Transverse colon (tissue), 4 donors: ENCODE measurements at regions of chr14 and their contacts with region 1.

Region 1: DNA sequence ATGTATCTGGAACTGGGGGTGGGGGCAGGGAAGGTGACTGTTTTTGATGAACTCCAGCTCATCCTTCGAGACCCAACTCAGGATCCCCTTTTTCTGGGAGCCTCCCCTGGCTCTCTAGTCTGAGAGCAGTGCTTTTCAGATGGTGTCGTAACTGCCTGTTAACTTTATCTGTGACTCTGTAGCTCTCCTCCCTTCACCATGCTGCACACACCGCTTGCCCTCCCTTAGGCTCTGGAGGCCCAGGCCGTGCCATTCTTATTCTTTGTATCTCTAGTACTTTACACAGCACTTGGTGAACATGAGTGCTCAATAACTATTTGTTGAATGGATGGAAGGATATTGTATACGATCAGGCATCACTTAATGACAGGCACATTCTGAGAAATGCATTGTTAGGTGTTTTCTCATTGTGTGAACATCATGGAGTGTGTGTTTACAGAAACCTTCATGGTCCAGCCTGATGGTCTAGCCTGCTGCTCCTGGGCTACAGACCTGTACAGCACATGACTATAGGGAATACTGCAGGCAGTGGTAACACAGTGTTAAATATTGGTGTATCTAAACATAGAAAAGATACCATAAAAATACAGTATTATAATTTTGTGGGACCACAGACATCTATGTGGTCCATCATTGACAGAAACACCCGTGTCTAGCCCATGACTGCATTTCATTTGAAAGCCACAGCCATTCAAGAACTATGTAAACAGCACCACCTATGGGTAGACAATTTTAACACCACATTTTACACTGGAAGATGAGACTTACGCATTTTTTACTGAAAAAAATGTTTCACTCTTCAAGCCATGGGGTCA is 91.8 kb downstream of the EML1 start:
- DNase-seq: no peak
- H3K4me3 ChIP-seq: no peak overlapping the region
- H3K27ac ChIP-seq: no peak overlapping the region
- H3K4me1 ChIP-seq: peaks cover 0 to 8% (median 3%) of the 10 kb centered on the region in 4 donors
- H3K27me3 ChIP-seq: no peaks in the 10 kb centered on the region
- CTCF ChIP-seq: peak; percentile 69 to 83 (median 71)
- EP300 ChIP-seq: no peak
- POLR2A ChIP-seq: no peak

Region 2: GRCh38 chr14:99524804-99525698 is 360.0 kb before region 1 on chr14:
- in situ Hi-C with region 1: loop called in 1 of 4 experiments (anchors 25 kb)
- intact Hi-C with region 1: no loop called
- DNase-seq: peak; percentile 38
- H3K4me3 ChIP-seq: no peak overlapping the region
- H3K27ac ChIP-seq: peak overlapping the region; percentile 43 to 84 (median 70)
- H3K4me1 ChIP-seq: peaks cover 31 to 43% (median 34%) of the 10 kb centered on the region in 4 donors
- H3K27me3 ChIP-seq: no peaks in the 10 kb centered on the region
- CTCF ChIP-seq: peak in 1 of 5 experiments; percentile 16
- EP300 ChIP-seq: no peak
- POLR2A ChIP-seq: no peak

Region 3: DNA sequence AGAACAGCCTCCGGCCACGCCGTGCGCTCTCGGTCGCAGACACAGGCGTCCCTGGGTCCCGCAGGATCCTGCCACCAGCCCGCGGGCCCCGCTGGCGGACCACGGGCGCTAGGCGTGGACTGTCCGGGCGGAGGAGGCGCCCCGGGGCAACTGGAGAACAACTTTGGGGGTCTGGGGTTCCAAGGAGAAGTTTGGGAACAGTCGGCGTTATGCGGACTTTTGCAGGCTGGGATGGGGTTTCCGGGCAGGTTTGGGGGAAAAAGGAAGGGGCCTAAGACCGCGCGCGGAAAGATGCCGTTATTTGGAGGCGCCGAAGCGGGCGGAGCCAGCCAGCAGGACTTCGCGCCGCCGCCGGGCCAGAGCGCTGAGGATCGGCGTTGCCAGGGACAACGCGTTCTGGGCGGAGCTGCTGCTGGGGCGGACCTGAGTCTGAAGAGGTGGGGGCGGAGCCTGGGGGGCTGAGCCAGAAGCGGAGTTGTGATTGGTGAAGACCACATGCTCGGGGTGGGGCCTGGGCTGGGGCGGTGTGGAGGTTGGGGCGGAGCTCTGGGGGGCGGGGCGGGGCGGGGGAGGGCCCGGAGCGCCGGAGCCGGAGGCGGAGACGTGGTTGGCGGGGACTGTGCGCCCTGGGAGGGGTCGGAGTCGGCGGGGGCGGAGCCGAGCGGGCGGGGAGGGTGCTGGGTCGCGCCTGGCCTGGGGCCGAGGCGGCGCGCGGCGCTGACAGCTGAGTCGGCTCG is 201.3 kb before region 1 on chr14 and contains the start of gene CYP46A1:
- in situ Hi-C with region 1: no loop called
- intact Hi-C with region 1: loop called (anchors 5 kb)
- DNase-seq: peak; percentile 100
- H3K4me3 ChIP-seq: peak within 1 kb of the TSS; percentile 62 to 93 (median 70)
- H3K27ac ChIP-seq: peak within 1 kb of the TSS; percentile 82 to 92 (median 88)
- H3K4me1 ChIP-seq: peaks cover 12 to 16% (median 15%) of the 10 kb centered on the region in 4 donors
- H3K27me3 ChIP-seq: peaks cover 29% of the 10 kb centered on the region
- CTCF ChIP-seq: no peak
- EP300 ChIP-seq: no peak
- POLR2A ChIP-seq: no peak
- total RNA-seq, gene CYP46A1: 0.27 to 0.75 (median 0.52) TPM

Region 4: DNA sequence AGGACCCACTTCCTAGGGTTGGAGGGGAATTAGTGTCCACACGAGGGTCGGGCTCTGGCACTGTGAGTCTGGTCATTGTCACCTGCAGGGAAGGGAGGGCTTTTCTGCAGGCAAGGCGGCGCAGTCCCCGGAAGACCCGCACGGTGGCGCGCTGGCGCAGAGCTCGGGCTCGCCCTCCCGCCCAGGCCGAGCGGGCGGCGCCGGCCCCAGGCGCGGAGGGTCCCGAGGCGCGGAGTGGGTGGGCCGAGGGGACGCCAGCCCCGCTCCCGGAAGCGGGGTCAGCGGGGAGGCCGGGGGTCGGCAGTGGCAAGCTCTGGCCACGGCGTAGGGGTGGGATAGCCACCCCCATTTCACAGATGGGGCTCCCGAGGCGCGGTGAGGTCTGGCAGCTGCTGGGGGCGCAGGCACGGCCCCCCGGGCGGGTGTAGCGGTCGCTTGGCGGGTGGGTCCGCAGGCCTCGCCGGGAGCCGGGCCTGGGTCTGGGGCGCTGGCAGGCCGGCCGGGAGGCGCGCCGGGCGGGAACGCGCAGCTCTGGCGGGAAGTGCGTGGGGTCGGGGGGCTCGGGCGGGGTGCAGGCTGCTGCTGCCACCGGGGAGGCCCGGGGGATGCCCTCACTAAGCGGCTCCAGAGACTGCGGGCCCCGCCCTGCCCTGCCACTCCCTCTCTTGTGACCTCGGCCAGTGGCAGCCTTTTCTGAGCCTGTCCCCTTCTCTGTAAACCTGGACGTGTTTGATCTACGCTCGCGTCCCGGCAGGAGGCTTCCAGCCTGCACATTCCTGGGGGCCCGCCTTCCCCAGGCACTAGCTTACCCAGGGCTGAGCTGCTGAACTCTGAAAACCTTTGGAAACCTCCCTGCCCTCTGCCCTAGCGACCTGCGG is 154.8 kb before region 1 on chr14:
- in situ Hi-C with region 1: loop called (anchors 5 to 10 kb)
- intact Hi-C with region 1: loop called (anchors 5 kb)
- DNase-seq: peak; percentile 68
- H3K4me3 ChIP-seq: peak overlapping the region; percentile 26 to 54 (median 46)
- H3K27ac ChIP-seq: peak overlapping the region in 3 of 4 donors; percentile 17 to 48 (median 30)
- H3K4me1 ChIP-seq: peaks cover 5 to 12% (median 11%) of the 10 kb centered on the region in 4 donors
- H3K27me3 ChIP-seq: peaks cover 19% of the 10 kb centered on the region
- CTCF ChIP-seq: peak; percentile 50 to 89 (median 78)
- EP300 ChIP-seq: no peak
- POLR2A ChIP-seq: no peak

Region 5: GRCh38 chr14:99910337-99911309 is 25.6 kb after region 1 on chr14:
- in situ Hi-C with region 1: no loop called
- intact Hi-C with region 1: no loop called
- DNase-seq: no peak
- H3K4me3 ChIP-seq: no peak overlapping the region
- H3K27ac ChIP-seq: no peak overlapping the region
- H3K4me1 ChIP-seq: no peaks in the 10 kb centered on the region
- H3K27me3 ChIP-seq: no peaks in the 10 kb centered on the region
- CTCF ChIP-seq: no peak
- EP300 ChIP-seq: no peak
- POLR2A ChIP-seq: no peak